ENCODE measurements at regions of chr6 and their contacts with region 1.

Region 1: GRCh38 chr6:16585805-16586204 is 175.5 kb downstream of the ATXN1 start:
- DNase-seq: no peak
- H3K4me3 ChIP-seq: peak overlapping the region in 22 of 59 donors; percentile 2 to 48 (median 29)
- H3K27ac ChIP-seq: peak overlapping the region in 47 of 59 donors; percentile 8 to 90 (median 58)
- H3K27me3 ChIP-seq: no peaks in the 10 kb centered on the region
- CTCF ChIP-seq: no peak

Region 2: DNA sequence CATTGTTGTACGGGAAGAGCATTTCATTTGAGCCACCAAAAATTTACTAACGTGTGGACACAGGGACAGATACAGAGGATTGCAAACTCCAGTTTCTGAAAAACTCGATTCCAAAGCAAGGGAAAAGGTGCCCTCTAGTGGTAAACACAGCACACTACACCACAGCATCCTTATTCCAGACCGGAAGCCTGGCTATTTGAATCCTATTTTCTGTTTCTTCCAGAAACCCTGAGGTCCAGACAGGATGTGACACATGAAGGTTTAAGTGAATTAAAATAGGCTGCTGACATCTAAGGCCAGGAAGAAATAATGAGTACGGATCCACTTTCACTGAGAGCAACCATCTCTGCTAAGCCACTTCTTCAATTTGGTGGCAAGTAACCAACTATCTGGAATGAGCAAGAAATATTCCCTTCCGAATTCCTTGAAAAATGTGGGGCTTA is 379.2 kb before region 1 on chr6:
- intact Hi-C with region 1: no loop called
- DNase-seq: peak in 4 of 10 donors; percentile 47 to 77 (median 53)
- H3K4me3 ChIP-seq: no peak overlapping the region
- H3K27ac ChIP-seq: no peak overlapping the region
- H3K27me3 ChIP-seq: peaks cover 0 to 12% (median 0%) of the 10 kb centered on the region in 45 donors
- CTCF ChIP-seq: peak; percentile 93 to 100 (median 98)

Region 3: GRCh38 chr6:16625291-16626265 is 39.8 kb after region 1 on chr6:
- intact Hi-C with region 1: loop called in 1 of 2 experiments (anchors 5 kb)
- DNase-seq: no peak
- H3K4me3 ChIP-seq: no peak overlapping the region
- H3K27ac ChIP-seq: peak overlapping the region in 50 of 59 donors; percentile 1 to 71 (median 34)
- H3K27me3 ChIP-seq: no peaks in the 10 kb centered on the region
- CTCF ChIP-seq: no peak